Cardiac septum (tissue), 1 donor: ENCODE measurements at regions of chr7 and their contacts with region 1.

Region 1: GRCh38 chr7:31735991-31736982 is 49.3 kb downstream of the PPP1R17 start:
- DNase-seq: no peak

Region 2: GRCh38 chr7:31134246-31135188 is 601.8 kb before region 1 on chr7:
- intact Hi-C with region 1: loop called (anchors 5 kb)
- DNase-seq: no peak

Region 3: DNA sequence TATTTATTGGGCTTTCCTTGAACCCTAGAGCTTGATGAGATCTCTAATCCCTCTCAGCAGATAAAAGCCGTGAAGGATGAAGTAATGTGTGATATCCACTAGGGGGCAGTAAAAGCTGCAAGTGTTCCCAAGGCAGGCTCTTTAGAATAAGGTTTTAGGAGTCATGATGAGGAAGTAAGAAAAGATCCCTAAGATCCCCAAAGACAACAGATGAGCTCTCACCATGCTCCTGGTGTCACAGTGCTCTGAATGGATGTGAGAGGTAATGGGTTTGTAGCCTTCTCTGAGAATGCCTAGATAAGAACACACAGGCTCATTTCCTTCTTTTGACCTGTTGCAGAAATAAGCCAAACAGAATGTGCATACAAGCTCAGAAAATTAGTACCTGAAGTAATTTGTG is 292.8 kb before region 1 on chr7:
- intact Hi-C with region 1: loop called (anchors 5 kb)
- DNase-seq: no peak

Region 4: GRCh38 chr7:31648288-31648687 is 88.0 kb before region 1 on chr7:
- intact Hi-C with region 1: loop called (anchors 2 kb)
- DNase-seq: no peak